ENCODE measurements at regions of chr3 and their contacts with region 1.

Region 1: GRCh38 chr3:155323063-155323666 is 29.7 kb upstream of the STRIT1 start:
- DNase-seq: peak; percentile 51
- H3K4me3 ChIP-seq: no peak overlapping the region
- H3K27ac ChIP-seq: no peak overlapping the region
- H3K4me1 ChIP-seq: no peaks in the 10 kb centered on the region
- H3K27me3 ChIP-seq: no peaks in the 10 kb centered on the region
- CTCF ChIP-seq: peak; percentile 72 to 78

Region 2: GRCh38 chr3:154598166-154598565 is 725.0 kb before region 1 on chr3:
- CTCF ChIA-PET with region 1: no interaction called
- dilution Hi-C with region 1: no loop called
- in situ Hi-C with region 1: no loop called
- intact Hi-C with region 1: no loop called
- DNase-seq: no peak
- H3K4me3 ChIP-seq: no peak overlapping the region
- H3K27ac ChIP-seq: no peak overlapping the region
- H3K4me1 ChIP-seq: no peaks in the 10 kb centered on the region
- H3K27me3 ChIP-seq: peaks cover under 1% of the 10 kb centered on the region
- CTCF ChIP-seq: no peak

Region 3: DNA sequence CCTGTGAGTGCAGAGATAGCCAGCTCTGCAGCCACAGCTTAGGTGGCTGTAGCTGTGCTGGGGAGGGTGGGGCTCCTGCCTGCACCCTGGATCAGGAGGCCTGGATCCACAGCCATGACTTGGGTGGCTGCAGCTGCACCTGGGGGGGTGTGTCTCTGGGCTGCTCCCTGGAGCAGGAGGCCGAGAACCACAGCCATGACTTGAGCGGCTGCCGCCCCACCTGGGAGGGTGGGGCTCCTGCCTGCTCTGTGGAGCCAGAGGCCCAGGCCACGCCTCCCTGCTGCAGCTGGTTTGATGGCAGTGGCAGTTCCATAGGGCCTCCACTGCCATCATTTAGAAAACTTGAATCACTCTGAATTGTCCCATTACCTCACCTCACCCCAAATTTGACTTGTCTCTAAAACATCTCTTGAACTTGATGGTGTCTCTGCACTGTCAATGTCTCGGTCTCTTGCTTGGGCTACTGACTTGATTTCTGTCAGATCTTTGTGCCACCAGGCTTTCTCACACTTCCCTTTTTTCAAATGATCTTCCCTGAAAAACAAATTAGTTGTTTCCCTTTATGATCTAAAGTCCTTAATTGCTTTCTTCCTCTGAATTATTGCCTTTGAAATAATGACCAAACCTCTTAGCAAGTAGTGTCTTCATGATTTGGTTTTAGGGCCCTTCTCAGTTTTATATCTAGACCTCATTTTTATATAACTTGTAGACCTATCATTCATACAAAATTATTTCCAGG is 556.2 kb before region 1 on chr3:
- CTCF ChIA-PET with region 1: no interaction called
- dilution Hi-C with region 1: no loop called
- in situ Hi-C with region 1: loop called in 1 of 2 experiments (anchors 10 kb)
- intact Hi-C with region 1: no loop called
- DNase-seq: no peak
- H3K4me3 ChIP-seq: no peak overlapping the region
- H3K27ac ChIP-seq: no peak overlapping the region
- H3K4me1 ChIP-seq: no peaks in the 10 kb centered on the region
- H3K27me3 ChIP-seq: no peaks in the 10 kb centered on the region
- CTCF ChIP-seq: no peak

Region 4: GRCh38 chr3:154904328-154904727 is 418.8 kb before region 1 on chr3:
- CTCF ChIA-PET with region 1: no interaction called
- dilution Hi-C with region 1: no loop called
- in situ Hi-C with region 1: no loop called
- intact Hi-C with region 1: loop called (anchors 1 kb)
- DNase-seq: peak; percentile 9
- H3K4me3 ChIP-seq: no peak overlapping the region
- H3K27ac ChIP-seq: no peak overlapping the region
- H3K4me1 ChIP-seq: no peaks in the 10 kb centered on the region
- H3K27me3 ChIP-seq: peaks cover 3% of the 10 kb centered on the region
- CTCF ChIP-seq: peak; percentile 31 to 56

Region 5: DNA sequence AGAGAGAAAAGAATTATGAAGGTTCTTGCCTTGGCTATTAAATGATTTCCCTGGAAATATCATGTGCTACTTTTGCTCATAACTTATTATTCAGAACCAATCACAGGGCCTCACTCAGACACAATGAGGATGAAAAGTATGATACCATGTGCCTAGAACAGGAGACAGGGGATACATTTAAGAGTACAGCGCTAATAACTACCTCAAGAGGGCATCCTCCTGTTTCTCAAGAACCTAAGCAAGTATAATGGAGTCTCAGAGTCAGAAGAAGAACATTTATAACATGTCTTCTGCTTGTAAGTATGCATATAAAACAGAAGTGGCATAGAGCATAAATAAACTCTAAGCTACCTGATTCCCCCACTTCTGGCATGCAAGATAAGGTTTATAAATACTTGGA is 368.4 kb before region 1 on chr3:
- CTCF ChIA-PET with region 1: no interaction called
- dilution Hi-C with region 1: no loop called
- in situ Hi-C with region 1: loop called (anchors 5 to 10 kb)
- intact Hi-C with region 1: loop called (anchors 1 kb)
- DNase-seq: peak; percentile 40
- H3K4me3 ChIP-seq: no peak overlapping the region
- H3K27ac ChIP-seq: no peak overlapping the region
- H3K4me1 ChIP-seq: no peaks in the 10 kb centered on the region
- H3K27me3 ChIP-seq: no peaks in the 10 kb centered on the region
- CTCF ChIP-seq: peak; percentile 59 to 78

Region 6: GRCh38 chr3:155079746-155080487 is 243.2 kb before region 1 on chr3 and contains the start of gene MME:
- CTCF ChIA-PET with region 1: no interaction called
- dilution Hi-C with region 1: no loop called
- in situ Hi-C with region 1: no loop called
- intact Hi-C with region 1: loop called (anchors 5 kb)
- DNase-seq: peak; percentile 69
- H3K4me3 ChIP-seq: peak within 1 kb of the TSS; percentile 77 to 87 (median 86)
- H3K27ac ChIP-seq: no peak within 1 kb of the TSS
- H3K4me1 ChIP-seq: peaks cover 16% of the 10 kb centered on the region
- H3K27me3 ChIP-seq: no peaks in the 10 kb centered on the region
- CTCF ChIP-seq: no peak
- total RNA-seq, gene MME: 22.5 to 94.5 TPM

Measured in mammary epithelial cell (primary cell).